PC-3 (cell line): ENCODE measurements at regions of chr1 and their contacts with region 1.

Region 1: GRCh38 chr1:63833363-63834119 is 59.7 kb downstream of the ROR1 start:
- DNase-seq: no peak
- ATAC-seq: no peak
- H3K4me3 ChIP-seq: no peak overlapping the region
- H3K27ac ChIP-seq: no peak overlapping the region
- H3K4me1 ChIP-seq: peaks cover 25% of the 10 kb centered on the region
- H3K27me3 ChIP-seq: no peaks in the 10 kb centered on the region
- CTCF ChIP-seq: no peak

Region 2: GRCh38 chr1:63512584-63512983 is 321.0 kb before region 1 on chr1:
- CTCF ChIA-PET with region 1: no interaction called
- POLR2A ChIA-PET with region 1: no interaction called
- intact Hi-C with region 1: no loop called
- DNase-seq: no peak
- ATAC-seq: no peak
- H3K4me3 ChIP-seq: no peak overlapping the region
- H3K27ac ChIP-seq: no peak overlapping the region
- H3K4me1 ChIP-seq: no peaks in the 10 kb centered on the region
- H3K27me3 ChIP-seq: no peaks in the 10 kb centered on the region
- CTCF ChIP-seq: no peak

Region 3: GRCh38 chr1:63847308-63847910 is 13.9 kb after region 1 on chr1:
- CTCF ChIA-PET with region 1: no interaction called
- POLR2A ChIA-PET with region 1: interaction called, 10 read pairs
- intact Hi-C with region 1: no loop called
- DNase-seq: peak; percentile 89
- ATAC-seq: no peak
- H3K4me3 ChIP-seq: no peak overlapping the region
- H3K27ac ChIP-seq: no peak overlapping the region
- H3K4me1 ChIP-seq: peaks cover 11% of the 10 kb centered on the region
- H3K27me3 ChIP-seq: no peaks in the 10 kb centered on the region
- CTCF ChIP-seq: peak; percentile 48